Pancreas (tissue), 10 donors: ENCODE measurements at regions of chr1 and their contacts with region 1.

Region 1: DNA sequence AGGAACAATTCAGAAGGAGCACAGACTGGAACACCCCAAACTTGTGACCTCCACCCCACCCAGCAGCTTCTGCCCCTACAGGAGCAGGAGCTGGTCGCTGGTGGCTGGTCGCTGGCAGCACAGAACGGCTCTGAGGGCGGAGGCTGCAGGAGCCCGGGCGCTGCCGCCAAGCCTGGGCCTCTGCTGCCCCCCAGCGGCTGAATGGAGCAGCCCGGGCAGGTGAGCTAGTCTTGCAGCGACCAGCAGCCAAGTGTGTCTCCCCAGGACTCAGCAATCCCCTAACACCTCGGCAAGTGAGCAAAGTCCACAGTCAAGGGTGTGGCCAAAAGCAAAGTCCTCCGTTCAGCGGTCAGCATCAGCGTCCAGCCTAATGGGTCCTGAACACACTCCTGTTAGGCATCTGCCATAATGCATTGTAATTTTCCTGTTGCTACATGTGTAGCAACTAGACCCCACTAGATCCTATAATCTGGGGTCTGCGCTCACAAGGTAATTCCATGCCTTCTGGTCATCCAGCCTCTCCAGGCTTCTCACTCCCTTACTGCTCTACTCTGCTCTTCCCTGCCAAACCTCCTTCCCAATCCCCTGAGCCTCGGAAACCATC is 12.1 kb upstream of the GJB5 start:
- DNase-seq: peak; percentile 57 to 98 (median 82)
- ATAC-seq: peak; percentile 92 to 99 (median 97)
- H3K4me3 ChIP-seq: no peak overlapping the region
- H3K27ac ChIP-seq: no peak overlapping the region
- H3K4me1 ChIP-seq: no peaks in the 10 kb centered on the region
- H3K27me3 ChIP-seq: no peaks in the 10 kb centered on the region
- CTCF ChIP-seq: peak; percentile 94 to 98 (median 97)

Region 2: DNA sequence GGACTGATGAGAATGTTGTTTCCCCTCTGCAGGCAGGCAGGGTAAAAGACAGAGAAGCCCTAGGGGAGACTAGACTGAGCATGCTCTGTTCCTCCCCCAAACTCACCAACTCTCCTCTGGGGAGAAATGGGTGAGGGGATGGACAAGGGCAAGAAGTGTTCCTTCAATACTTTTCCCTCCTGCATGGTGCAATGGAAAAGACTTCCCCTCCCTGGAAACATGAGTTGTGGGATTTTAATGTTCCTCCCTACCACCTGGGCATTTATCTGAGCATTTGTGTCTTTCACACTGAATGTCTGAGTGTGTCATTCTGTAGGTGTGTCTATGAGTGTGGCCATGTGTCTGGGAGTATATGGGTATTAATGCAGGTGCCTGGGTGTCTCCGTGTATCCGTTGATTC is 290.3 kb before region 1 on chr1:
- intact Hi-C with region 1: loop called in 1 of 3 experiments (anchors 10 kb)
- DNase-seq: no peak
- ATAC-seq: no peak
- H3K4me3 ChIP-seq: no peak overlapping the region
- H3K27ac ChIP-seq: no peak overlapping the region
- H3K4me1 ChIP-seq: no peaks in the 10 kb centered on the region
- H3K27me3 ChIP-seq: no peaks in the 10 kb centered on the region
- CTCF ChIP-seq: no peak